BJ (cell line): ENCODE measurements at regions of chr17 and their contacts with region 1.

Region 1: GRCh38 chr17:83012868-83013778 is 66.3 kb upstream of the METRNL start:
- DNase-seq: peak; percentile 91
- H3K4me3 ChIP-seq: peak overlapping the region; percentile 18; the same call in 1 of the 2 replicates
- H3K27me3 ChIP-seq: no peaks in the 10 kb centered on the region
- CTCF ChIP-seq: no peak

Region 2: DNA sequence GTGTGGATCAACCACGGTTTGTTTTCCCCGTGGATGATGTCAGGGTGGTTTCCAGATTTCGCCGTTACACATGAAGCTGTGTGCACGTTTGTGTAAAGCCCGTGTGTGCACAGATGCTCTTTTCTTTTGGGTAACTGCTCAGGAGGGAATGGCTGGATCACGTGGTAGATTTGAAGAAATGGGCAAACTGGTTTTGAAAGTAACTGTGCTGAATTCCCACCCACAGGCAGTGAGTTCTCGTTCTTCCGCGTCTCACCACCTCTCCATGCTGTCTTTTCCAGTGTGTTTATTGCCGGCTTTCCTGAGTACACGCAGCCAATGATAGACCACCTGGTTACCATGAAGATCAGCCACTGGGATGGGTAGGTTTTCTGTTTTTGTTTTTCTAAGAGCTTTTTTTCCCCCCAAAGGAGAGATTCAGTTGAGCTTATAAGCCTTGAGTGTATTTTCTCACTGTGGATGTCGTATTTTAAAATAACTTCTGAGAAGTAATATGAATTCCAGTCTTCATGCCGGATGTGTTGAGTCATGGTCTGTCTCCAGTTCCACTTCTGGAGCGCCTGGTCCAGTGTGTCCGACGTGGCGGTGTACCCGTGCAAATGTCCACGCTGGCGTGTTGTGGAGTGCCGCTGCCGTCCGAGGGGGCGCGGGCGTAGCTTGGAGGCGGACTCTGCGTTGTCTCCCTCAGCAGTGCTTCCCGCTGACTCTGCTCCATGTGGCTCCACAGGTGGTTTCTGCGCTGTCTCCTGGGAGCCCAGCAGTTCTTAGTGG is 112.6 kb before region 1 on chr17:
- CTCF ChIA-PET with region 1: no interaction called
- POLR2A ChIA-PET with region 1: no interaction called
- DNase-seq: no peak
- H3K4me3 ChIP-seq: no peak overlapping the region
- H3K27me3 ChIP-seq: no peaks in the 10 kb centered on the region
- CTCF ChIP-seq: no peak

Region 3: GRCh38 chr17:83189044-83190003 is 176.2 kb after region 1 on chr17:
- CTCF ChIA-PET with region 1: no interaction called
- POLR2A ChIA-PET with region 1: no interaction called
- DNase-seq: peak; percentile 74
- H3K4me3 ChIP-seq: no peak overlapping the region
- H3K27me3 ChIP-seq: no peaks in the 10 kb centered on the region
- CTCF ChIP-seq: no peak

Region 4: GRCh38 chr17:83203073-83203471 is 189.9 kb after region 1 on chr17:
- CTCF ChIA-PET with region 1: no interaction called
- POLR2A ChIA-PET with region 1: interaction called, 23 read pairs
- DNase-seq: peak; percentile 96
- H3K4me3 ChIP-seq: no peak overlapping the region
- H3K27me3 ChIP-seq: no peaks in the 10 kb centered on the region
- CTCF ChIP-seq: no peak